Activated CD8-positive, alpha-beta T cell treated with anti-CD3 and anti-CD28 coated beads, Interleukin-2, amount 10 ng/mL, durations not matched to agents 7 days and 5 days (primary cell): ENCODE measurements at regions of chr1 and their contacts with region 1.

Region 1: GRCh38 chr1:225896937-225897549 is 8.1 kb upstream of the LEFTY1 start:
- DNase-seq: peak; percentile 89
- ATAC-seq: peak; percentile 98
- H3K4me3 Mint-ChIP-seq: peak overlapping the region; percentile 56
- H3K27ac Mint-ChIP-seq: peak overlapping the region; percentile 80
- H3K4me1 Mint-ChIP-seq: peaks cover 42% of the 10 kb centered on the region
- H3K27me3 Mint-ChIP-seq: peaks cover 12% of the 10 kb centered on the region

Region 2: GRCh38 chr1:225881969-225882693 is 14.9 kb before region 1 on chr1 and contains the start of gene TMEM63A:
- CTCF ChIA-PET with region 1: interaction called, 42 read pairs
- POLR2A ChIA-PET with region 1: interaction called, 29 read pairs
- DNase-seq: peak; percentile 93
- ATAC-seq: peak; percentile 83
- H3K4me3 Mint-ChIP-seq: peak within 1 kb of the TSS; percentile 87
- H3K27ac Mint-ChIP-seq: peak within 1 kb of the TSS; percentile 92
- H3K4me1 Mint-ChIP-seq: peaks cover 56% of the 10 kb centered on the region
- H3K27me3 Mint-ChIP-seq: peaks cover 8% of the 10 kb centered on the region
- total RNA-seq, gene TMEM63A: 83.5 to 85.8 TPM